ENCODE measurements at regions of chr11 and their contacts with region 1.

Region 1: DNA sequence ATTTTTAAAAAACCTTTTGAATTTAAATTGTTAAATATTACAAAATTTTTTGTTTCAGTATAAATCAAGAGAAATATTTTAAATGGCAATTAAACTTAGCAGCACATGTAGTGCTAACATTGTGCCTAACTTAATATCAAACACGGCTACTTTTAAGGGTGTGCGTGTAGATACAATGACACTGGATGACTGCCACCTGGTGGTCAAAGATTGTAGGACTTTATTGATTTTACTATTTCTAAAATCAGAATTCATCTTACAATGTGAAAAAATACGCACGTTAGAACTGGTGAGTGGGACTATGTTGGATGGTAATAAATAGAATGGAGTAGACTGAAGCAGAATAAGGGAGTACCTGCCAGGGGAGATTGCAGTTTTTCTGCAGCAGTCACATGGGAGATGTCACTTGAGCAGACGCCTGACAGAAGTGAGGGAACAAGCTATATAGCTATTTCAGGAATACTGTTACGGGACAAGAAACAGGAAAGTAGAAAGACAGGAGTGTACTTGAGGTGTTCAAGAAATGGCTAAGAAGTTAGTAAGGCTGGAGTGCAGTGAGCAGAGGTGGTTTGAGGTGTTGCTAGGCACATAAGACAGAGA is 52.9 kb downstream of the UVRAG start:
- DNase-seq: peak; percentile 65 to 79 (median 72)
- H3K4me3 ChIP-seq: no peak overlapping the region
- H3K27ac ChIP-seq: no peak overlapping the region
- H3K4me1 ChIP-seq: peaks cover 15 to 41% (median 31%) of the 10 kb centered on the region in 4 experiments
- H3K27me3 ChIP-seq: no peaks in the 10 kb centered on the region

Region 2: GRCh38 chr11:75814686-75815344 is 53.1 kb before region 1 on chr11 and contains the start of gene UVRAG:
- CTCF ChIA-PET with region 1: interaction called, 42 read pairs
- POLR2A ChIA-PET with region 1: no interaction called
- DNase-seq: peak; percentile 99 to 100 (median 99)
- H3K4me3 ChIP-seq: peak within 1 kb of the TSS; percentile 92 to 98 (median 95)
- H3K27ac ChIP-seq: peak within 1 kb of the TSS; percentile 85 to 93
- H3K4me1 ChIP-seq: peaks cover 5 to 37% (median 28%) of the 10 kb centered on the region in 4 experiments
- H3K27me3 ChIP-seq: no peaks in the 10 kb centered on the region

Measured in common myeloid progenitor, CD34-positive (primary cell).